GM12878 (cell line): ENCODE measurements at regions of chr3 and their contacts with region 1.

Region 1: GRCh38 chr3:81302045-81302444 is 459.4 kb downstream of the GBE1 start:
- DNase-seq: no peak
- ATAC-seq: peak; percentile 77
- H3K4me3 ChIP-seq: no peak overlapping the region
- H3K27ac ChIP-seq: no peak overlapping the region
- H3K4me1 ChIP-seq: no peaks in the 10 kb centered on the region
- H3K27me3 ChIP-seq: no peaks in the 10 kb centered on the region; a peak in 1 of 4 replicates
- CTCF ChIP-seq: peak; percentile 63 to 72 (median 68)
- EP300 ChIP-seq: no peak
- POLR2A ChIP-seq: no peak
- RAD21 ChIP-seq: peak; percentile 58

Region 2: DNA sequence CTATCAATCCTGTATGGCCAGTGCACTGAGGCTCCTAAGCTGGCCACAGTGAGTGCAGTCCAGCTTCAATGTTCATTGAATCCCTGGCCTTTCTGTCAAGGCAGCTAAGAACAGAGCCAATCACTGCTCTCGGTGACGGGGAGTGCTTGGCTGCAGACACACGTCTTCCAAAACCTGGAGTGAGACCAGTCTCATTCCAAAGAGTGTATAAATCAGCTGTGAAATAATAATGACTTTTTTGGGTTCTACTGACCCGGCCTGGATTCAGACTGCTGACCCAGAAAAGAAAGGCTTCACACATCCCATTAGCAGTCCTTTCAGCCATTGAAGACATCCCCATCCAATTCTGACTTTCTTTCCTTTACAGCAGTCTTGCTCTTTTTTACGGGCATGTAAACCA is 206.1 kb before region 1 on chr3:
- CTCF ChIA-PET with region 1: no interaction called
- POLR2A ChIA-PET with region 1: no interaction called
- RAD21 ChIA-PET with region 1: no interaction called
- SMC1A ChIA-PET with region 1: no interaction called
- in situ Hi-C with region 1: no loop called
- intact Hi-C with region 1: no loop called
- DNase-seq: no peak
- ATAC-seq: no peak
- H3K4me3 ChIP-seq: no peak overlapping the region
- H3K27ac ChIP-seq: no peak overlapping the region
- H3K4me1 ChIP-seq: no peaks in the 10 kb centered on the region
- H3K27me3 ChIP-seq: no peaks in the 10 kb centered on the region
- CTCF ChIP-seq: no peak
- EP300 ChIP-seq: no peak
- POLR2A ChIP-seq: no peak
- RAD21 ChIP-seq: no peak

Region 3: DNA sequence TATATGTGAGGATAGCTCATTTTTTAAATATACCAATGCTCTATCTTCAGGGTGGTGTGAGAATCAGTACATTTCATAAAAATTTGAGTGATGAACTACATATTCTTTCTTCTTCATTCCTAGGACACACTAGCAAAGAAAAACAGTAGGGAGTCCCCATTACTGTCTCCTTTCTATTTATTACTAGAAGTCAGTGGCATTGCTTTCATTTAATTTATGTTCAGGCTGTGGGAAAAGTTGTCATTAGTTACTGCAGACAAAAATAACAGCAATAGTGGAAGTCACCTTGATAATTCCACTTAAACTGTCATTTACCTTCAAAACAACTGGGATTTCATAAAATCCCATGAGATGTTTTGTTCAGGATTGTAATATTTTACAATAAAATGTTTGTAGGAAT is 13.0 kb after region 1 on chr3:
- CTCF ChIA-PET with region 1: interaction called, 16 read pairs
- POLR2A ChIA-PET with region 1: no interaction called
- RAD21 ChIA-PET with region 1: interaction called, 3 read pairs
- SMC1A ChIA-PET with region 1: no interaction called
- in situ Hi-C with region 1: no loop called
- intact Hi-C with region 1: no loop called
- DNase-seq: no peak
- ATAC-seq: no peak
- H3K4me3 ChIP-seq: no peak overlapping the region
- H3K27ac ChIP-seq: no peak overlapping the region
- H3K4me1 ChIP-seq: no peaks in the 10 kb centered on the region
- H3K27me3 ChIP-seq: no peaks in the 10 kb centered on the region
- CTCF ChIP-seq: no peak
- EP300 ChIP-seq: no peak
- POLR2A ChIP-seq: no peak
- RAD21 ChIP-seq: no peak

Region 4: GRCh38 chr3:81338676-81339555 is 36.9 kb after region 1 on chr3:
- CTCF ChIA-PET with region 1: interaction called, 52 read pairs
- POLR2A ChIA-PET with region 1: no interaction called
- RAD21 ChIA-PET with region 1: interaction called, 4 read pairs
- SMC1A ChIA-PET with region 1: interaction called, 27 read pairs
- in situ Hi-C with region 1: no loop called
- intact Hi-C with region 1: loop called (anchors 2 kb)
- DNase-seq: no peak
- ATAC-seq: peak; percentile 92
- H3K4me3 ChIP-seq: no peak overlapping the region
- H3K27ac ChIP-seq: no peak overlapping the region
- H3K4me1 ChIP-seq: no peaks in the 10 kb centered on the region
- H3K27me3 ChIP-seq: no peaks in the 10 kb centered on the region
- CTCF ChIP-seq: peak; percentile 40 to 56 (median 43)
- EP300 ChIP-seq: no peak
- POLR2A ChIP-seq: no peak
- RAD21 ChIP-seq: peak; percentile 42

Region 5: DNA sequence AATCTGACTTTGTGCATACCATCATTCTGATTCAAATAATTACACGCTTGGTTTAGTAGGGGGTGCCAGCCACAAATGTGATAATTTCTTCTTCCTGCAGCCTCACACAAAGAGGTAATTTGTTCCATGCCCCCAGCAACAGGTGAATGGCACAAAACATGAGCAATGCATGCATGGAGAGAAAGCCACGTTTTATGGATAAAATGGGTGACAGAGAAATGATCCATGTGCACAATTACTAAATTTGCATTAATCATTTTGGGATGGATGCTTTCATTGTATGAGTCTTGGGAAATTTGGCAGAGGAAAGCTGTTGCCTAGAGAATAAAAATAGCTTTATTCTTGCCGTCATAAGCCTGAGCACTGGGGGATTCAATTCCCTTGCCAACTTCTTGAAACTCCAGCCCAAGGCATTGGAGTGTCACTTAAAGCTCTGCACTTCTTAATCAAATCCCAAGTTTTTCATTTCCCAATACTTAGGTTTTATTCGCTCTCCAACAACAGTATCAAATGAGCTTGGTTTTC is 47.8 kb after region 1 on chr3:
- CTCF ChIA-PET with region 1: interaction called, 10 read pairs
- POLR2A ChIA-PET with region 1: no interaction called
- RAD21 ChIA-PET with region 1: interaction called, 3 read pairs
- SMC1A ChIA-PET with region 1: no interaction called
- in situ Hi-C with region 1: no loop called
- intact Hi-C with region 1: no loop called
- DNase-seq: no peak
- ATAC-seq: no peak
- H3K4me3 ChIP-seq: no peak overlapping the region
- H3K27ac ChIP-seq: no peak overlapping the region
- H3K4me1 ChIP-seq: no peaks in the 10 kb centered on the region
- H3K27me3 ChIP-seq: no peaks in the 10 kb centered on the region
- CTCF ChIP-seq: no peak
- EP300 ChIP-seq: no peak
- POLR2A ChIP-seq: no peak
- RAD21 ChIP-seq: no peak